ENCODE measurements at regions of chrX and their contacts with region 1.

Region 1: GRCh38 chrX:147803948-147804347 is 107.8 kb upstream of the FMR1 start:
- DNase-seq: peak in 3 of 5 donors; percentile 1 to 19 (median 1)
- H3K4me3 ChIP-seq: no peak overlapping the region
- H3K4me3 Mint-ChIP-seq: no peak overlapping the region
- H3K27ac ChIP-seq: no peak overlapping the region
- H3K27ac Mint-ChIP-seq: peak overlapping the region in 2 of 7 donors; percentile 60 to 74
- H3K4me1 ChIP-seq: no peaks in the 10 kb centered on the region
- H3K4me1 Mint-ChIP-seq: peaks cover 0 to 5% (median 0%) of the 10 kb centered on the region in 4 donors
- H3K27me3 ChIP-seq: no peaks in the 10 kb centered on the region
- H3K27me3 Mint-ChIP-seq: no peaks in the 10 kb centered on the region

Region 2: GRCh38 chrX:147476008-147476407 is 327.9 kb before region 1 on chrX:
- CTCF ChIA-PET with region 1: no interaction called
- POLR2A ChIA-PET with region 1: no interaction called
- intact Hi-C with region 1: loop called (anchors 5 kb)
- DNase-seq: peak in 1 of 5 donors; percentile 6
- H3K4me3 ChIP-seq: no peak overlapping the region
- H3K4me3 Mint-ChIP-seq: no peak overlapping the region
- H3K27ac ChIP-seq: no peak overlapping the region
- H3K27ac Mint-ChIP-seq: no peak overlapping the region
- H3K4me1 ChIP-seq: no peaks in the 10 kb centered on the region
- H3K4me1 Mint-ChIP-seq: peaks cover 0 to 5% (median 0%) of the 10 kb centered on the region in 4 donors
- H3K27me3 ChIP-seq: no peaks in the 10 kb centered on the region
- H3K27me3 Mint-ChIP-seq: no peaks in the 10 kb centered on the region